MCF 10A (cell line): ENCODE measurements at regions of chr1 and their contacts with region 1.

Region 1: DNA sequence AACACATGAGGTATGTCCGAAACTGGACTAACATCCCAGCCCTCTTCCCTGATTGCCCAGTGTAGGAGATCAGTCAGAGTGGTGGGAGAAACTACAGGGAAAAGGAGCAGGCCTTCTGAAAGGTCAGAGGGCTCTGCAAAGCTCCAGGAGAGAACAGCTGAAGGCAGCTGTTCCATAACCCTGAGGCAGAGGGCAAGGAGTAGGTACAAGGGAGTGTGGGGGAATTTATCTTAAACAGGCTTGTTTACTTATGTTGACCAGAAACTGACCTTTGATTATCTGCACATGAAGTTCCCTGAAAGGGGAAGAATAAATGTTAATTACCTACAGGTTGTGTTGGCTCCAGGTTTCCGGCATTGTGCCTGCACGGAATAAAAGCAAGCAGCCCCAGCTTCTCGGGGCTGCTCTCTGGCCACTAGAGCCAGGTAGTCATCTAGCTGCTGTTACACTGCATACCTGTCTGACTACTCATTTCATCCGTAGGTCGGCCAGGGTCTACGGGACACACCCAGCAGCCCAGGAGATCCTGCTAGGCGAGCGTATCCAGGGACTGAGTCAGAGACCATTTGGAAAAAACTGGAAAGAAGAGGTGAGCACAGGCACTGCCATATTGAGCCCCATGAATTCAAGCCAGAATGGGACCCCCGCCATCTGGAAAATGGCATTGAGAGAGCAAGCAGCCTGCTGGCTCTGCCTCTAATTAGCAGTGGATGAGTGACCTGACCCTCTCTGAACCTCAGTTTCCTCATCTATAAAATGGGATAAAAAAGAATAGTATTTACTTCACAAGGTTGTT is 14.9 kb upstream of the PAQR7 start:
- DNase-seq: peak; percentile 92
- H3K4me3 Mint-ChIP-seq: no peak overlapping the region
- H3K27ac Mint-ChIP-seq: peak overlapping the region; percentile 85
- H3K4me1 Mint-ChIP-seq: peaks cover 17% of the 10 kb centered on the region
- H3K27me3 Mint-ChIP-seq: no peaks in the 10 kb centered on the region
- CTCF ChIP-seq: no peak

Region 2: GRCh38 chr1:25858906-25859789 is 31.3 kb before region 1 on chr1 and contains the start of gene AUNIP:
- CTCF ChIA-PET with region 1: interaction called, 5 read pairs
- POLR2A ChIA-PET with region 1: interaction called, 9 read pairs
- intact Hi-C with region 1: loop called (anchors 1 kb)
- DNase-seq: peak; percentile 86
- H3K4me3 Mint-ChIP-seq: peak within 1 kb of the TSS; percentile 97
- H3K27ac Mint-ChIP-seq: peak within 1 kb of the TSS; percentile 93
- H3K4me1 Mint-ChIP-seq: peaks cover 23% of the 10 kb centered on the region
- H3K27me3 Mint-ChIP-seq: no peaks in the 10 kb centered on the region
- CTCF ChIP-seq: no peak
- total RNA-seq, gene AUNIP: 5.2 and 9.4 TPM in 2 replicates

Region 3: GRCh38 chr1:25874934-25875855 is 15.2 kb before region 1 on chr1 and contains the start of gene PAQR7:
- CTCF ChIA-PET with region 1: interaction called, 5 read pairs
- POLR2A ChIA-PET with region 1: interaction called, 83 read pairs
- intact Hi-C with region 1: no loop called
- DNase-seq: peak; percentile 57
- H3K4me3 Mint-ChIP-seq: peak within 1 kb of the TSS; percentile 81
- H3K27ac Mint-ChIP-seq: peak within 1 kb of the TSS; percentile 54
- H3K4me1 Mint-ChIP-seq: peaks cover 15% of the 10 kb centered on the region
- H3K27me3 Mint-ChIP-seq: no peaks in the 10 kb centered on the region
- CTCF ChIP-seq: no peak
- total RNA-seq, gene PAQR7: 3.8 and 4.4 TPM in 2 replicates

Region 4: DNA sequence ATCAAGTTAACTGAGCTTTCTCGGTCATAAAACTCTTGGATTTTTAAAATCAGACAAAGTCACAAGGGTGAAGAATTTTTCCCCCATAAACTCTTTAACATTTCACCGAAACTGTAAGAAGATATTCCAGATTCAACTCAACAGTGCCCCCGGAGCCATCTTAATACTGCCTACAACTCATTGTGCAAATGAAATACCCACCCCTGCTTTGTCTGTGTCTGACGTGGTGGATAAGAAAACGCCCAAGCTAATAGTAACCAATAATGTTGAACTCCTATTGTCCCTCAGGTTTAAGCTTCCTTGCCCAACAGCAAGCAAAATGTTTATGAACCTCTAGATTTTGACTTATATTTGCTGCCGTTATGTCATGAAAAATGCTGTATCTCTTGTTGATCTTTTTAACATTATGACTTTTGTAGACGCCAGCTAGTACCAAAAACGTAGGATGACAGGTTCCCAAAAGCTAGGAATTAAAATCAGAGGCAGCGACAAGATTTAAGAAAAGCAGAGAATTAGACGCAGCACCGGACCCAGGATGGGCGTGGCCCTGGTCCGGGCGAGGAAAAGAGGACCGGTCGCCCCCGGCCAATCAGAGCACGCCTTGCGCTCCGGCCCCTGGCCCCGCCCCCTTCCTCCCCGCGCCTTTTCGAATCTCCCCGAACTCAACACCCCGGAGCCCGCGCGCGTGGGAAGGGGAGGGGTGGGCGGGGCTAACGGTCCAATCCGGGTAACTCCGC is 14.7 kb after region 1 on chr1:
- CTCF ChIA-PET with region 1: interaction called, 31 read pairs
- POLR2A ChIA-PET with region 1: interaction called, 75 read pairs
- intact Hi-C with region 1: no loop called
- DNase-seq: peak; percentile 91
- H3K4me3 Mint-ChIP-seq: peak overlapping the region; percentile 91
- H3K27ac Mint-ChIP-seq: peak overlapping the region; percentile 93
- H3K4me1 Mint-ChIP-seq: peaks cover 6% of the 10 kb centered on the region
- H3K27me3 Mint-ChIP-seq: no peaks in the 10 kb centered on the region
- CTCF ChIP-seq: no peak

Region 5: GRCh38 chr1:26049531-26050247 is 159.3 kb after region 1 on chr1:
- CTCF ChIA-PET with region 1: no interaction called
- POLR2A ChIA-PET with region 1: no interaction called
- intact Hi-C with region 1: no loop called
- DNase-seq: no peak
- H3K4me3 Mint-ChIP-seq: no peak overlapping the region
- H3K27ac Mint-ChIP-seq: no peak overlapping the region
- H3K4me1 Mint-ChIP-seq: no peaks in the 10 kb centered on the region
- H3K27me3 Mint-ChIP-seq: peaks cover 49% of the 10 kb centered on the region
- CTCF ChIP-seq: no peak